ENCODE measurements at regions of chr2 and their contacts with region 1.

Region 1: DNA sequence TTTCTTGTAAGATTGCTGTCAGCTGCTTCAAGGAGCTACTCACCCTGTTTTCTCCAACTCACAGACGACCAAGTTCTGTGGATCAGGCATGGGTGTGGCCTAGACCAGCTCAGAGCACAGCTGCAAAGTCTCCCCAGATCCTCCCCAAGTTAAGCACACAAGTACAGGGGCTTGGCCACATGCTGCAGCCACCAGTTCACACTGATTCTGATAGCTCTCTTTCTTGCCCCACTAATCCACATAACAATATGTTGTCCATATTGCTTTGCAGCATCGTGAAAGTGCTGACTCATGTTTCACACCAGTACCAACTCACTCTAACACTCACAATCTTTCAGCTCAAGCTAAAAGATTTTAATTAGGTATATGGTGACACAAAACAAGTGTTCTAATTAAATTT is 437.0 kb downstream of the PARD3B start:
- DNase-seq: no peak
- ATAC-seq: no peak
- H3K4me3 ChIP-seq: no peak overlapping the region
- H3K4me3 Mint-ChIP-seq: no peak overlapping the region
- H3K27ac ChIP-seq: no peak overlapping the region
- H3K27ac Mint-ChIP-seq: no peak overlapping the region
- H3K4me1 ChIP-seq: peaks cover 6% of the 10 kb centered on the region
- H3K4me1 Mint-ChIP-seq: peaks cover 13% of the 10 kb centered on the region
- H3K27me3 ChIP-seq: no peaks in the 10 kb centered on the region
- H3K27me3 Mint-ChIP-seq: no peaks in the 10 kb centered on the region
- CTCF ChIP-seq: no peak

Region 2: DNA sequence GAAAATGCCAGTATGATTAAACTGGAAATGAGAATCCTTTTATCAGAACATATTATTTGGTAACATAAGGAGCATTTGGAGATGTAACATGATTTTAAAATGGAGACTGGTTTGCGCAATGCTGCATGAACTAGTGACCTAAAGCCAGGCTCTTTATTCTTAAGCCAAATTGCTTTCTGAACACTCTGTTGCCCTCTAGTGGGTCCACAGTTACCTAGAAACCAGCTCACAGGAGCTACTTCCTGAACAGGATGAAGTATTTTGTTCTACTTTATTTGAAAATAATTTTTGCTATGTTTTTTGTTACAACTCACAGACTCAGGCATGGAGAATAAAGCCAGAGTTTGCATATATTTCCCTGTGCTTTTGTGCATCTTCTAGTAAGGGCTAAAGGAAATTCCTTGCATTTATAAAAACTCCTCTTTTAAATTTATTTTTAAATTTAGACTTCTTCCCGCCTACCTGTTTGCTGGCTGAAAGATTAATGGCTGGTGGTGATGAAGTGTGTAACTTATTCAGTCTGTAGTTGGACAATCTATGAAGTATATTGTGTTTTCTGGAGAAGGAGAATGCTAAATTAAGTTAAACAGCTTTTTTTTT is 290.3 kb before region 1 on chr2:
- CTCF ChIA-PET with region 1: no interaction called
- POLR2A ChIA-PET with region 1: no interaction called
- intact Hi-C with region 1: loop called in 1 of 2 experiments (anchors 10 kb)
- DNase-seq: peak in 2 of 9 experiments; percentile 29 to 44
- ATAC-seq: no peak
- H3K4me3 ChIP-seq: no peak overlapping the region
- H3K4me3 Mint-ChIP-seq: no peak overlapping the region
- H3K27ac ChIP-seq: no peak overlapping the region
- H3K27ac Mint-ChIP-seq: no peak overlapping the region
- H3K4me1 ChIP-seq: peaks cover 5% of the 10 kb centered on the region
- H3K4me1 Mint-ChIP-seq: peaks cover 8% of the 10 kb centered on the region
- H3K27me3 ChIP-seq: no peaks in the 10 kb centered on the region
- H3K27me3 Mint-ChIP-seq: no peaks in the 10 kb centered on the region
- CTCF ChIP-seq: peak; percentile 44

Region 3: GRCh38 chr2:204860274-204860673 is 122.0 kb before region 1 on chr2:
- CTCF ChIA-PET with region 1: no interaction called
- POLR2A ChIA-PET with region 1: no interaction called
- intact Hi-C with region 1: no loop called
- DNase-seq: no peak
- ATAC-seq: no peak
- H3K4me3 ChIP-seq: no peak overlapping the region
- H3K4me3 Mint-ChIP-seq: no peak overlapping the region
- H3K27ac ChIP-seq: no peak overlapping the region
- H3K27ac Mint-ChIP-seq: no peak overlapping the region
- H3K4me1 ChIP-seq: no peaks in the 10 kb centered on the region
- H3K4me1 Mint-ChIP-seq: no peaks in the 10 kb centered on the region
- H3K27me3 ChIP-seq: peaks cover 0 to 2% of the 10 kb centered on the region in 2 experiments
- H3K27me3 Mint-ChIP-seq: no peaks in the 10 kb centered on the region
- CTCF ChIP-seq: no peak

Measured in CD8-positive, alpha-beta T cell (primary cell).